Natural killer cell (primary cell): ENCODE measurements at regions of chr11 and their contacts with region 1.

Region 1: GRCh38 chr11:33987975-33988580 is 63.5 kb upstream of the CAPRIN1 start:
- DNase-seq: peak; percentile 44 to 90
- ATAC-seq: peak; percentile 75 to 98 (median 85)
- H3K4me3 ChIP-seq: no peak overlapping the region
- H3K4me3 Mint-ChIP-seq: no peak overlapping the region
- H3K27ac ChIP-seq: no peak overlapping the region
- H3K27ac Mint-ChIP-seq: no peak overlapping the region
- H3K4me1 ChIP-seq: no peaks in the 10 kb centered on the region
- H3K4me1 Mint-ChIP-seq: peaks cover 5% of the 10 kb centered on the region in 2 donors
- H3K27me3 ChIP-seq: no peaks in the 10 kb centered on the region
- H3K27me3 Mint-ChIP-seq: peaks cover 9 to 11% of the 10 kb centered on the region in 2 donors
- CTCF ChIP-seq: peak; percentile 75

Region 2: GRCh38 chr11:33808228-33808828 is 179.8 kb before region 1 on chr11:
- intact Hi-C with region 1: loop called (anchors 2 kb)
- DNase-seq: peak; percentile 79 to 89
- ATAC-seq: peak; percentile 88 to 97 (median 91)
- H3K4me3 ChIP-seq: no peak overlapping the region
- H3K4me3 Mint-ChIP-seq: no peak overlapping the region
- H3K27ac ChIP-seq: no peak overlapping the region
- H3K27ac Mint-ChIP-seq: no peak overlapping the region
- H3K4me1 ChIP-seq: no peaks in the 10 kb centered on the region
- H3K4me1 Mint-ChIP-seq: peaks cover 5% of the 10 kb centered on the region in 2 donors
- H3K27me3 ChIP-seq: peaks cover 16% of the 10 kb centered on the region
- H3K27me3 Mint-ChIP-seq: peaks cover 22 to 39% of the 10 kb centered on the region in 2 donors
- CTCF ChIP-seq: peak; percentile 89

Region 3: GRCh38 chr11:33857933-33858371 is 130.1 kb before region 1 on chr11:
- intact Hi-C with region 1: loop called (anchors 1 kb)
- DNase-seq: peak; percentile 65 to 84
- ATAC-seq: peak; percentile 86 to 96 (median 87)
- H3K4me3 ChIP-seq: no peak overlapping the region
- H3K4me3 Mint-ChIP-seq: no peak overlapping the region
- H3K27ac ChIP-seq: no peak overlapping the region
- H3K27ac Mint-ChIP-seq: no peak overlapping the region
- H3K4me1 ChIP-seq: no peaks in the 10 kb centered on the region
- H3K4me1 Mint-ChIP-seq: peaks cover 5 to 6% of the 10 kb centered on the region in 2 donors
- H3K27me3 ChIP-seq: peaks cover 2% of the 10 kb centered on the region
- H3K27me3 Mint-ChIP-seq: peaks cover 50 to 76% of the 10 kb centered on the region in 2 donors
- CTCF ChIP-seq: peak; percentile 87